Endothelial cell of umbilical vein (primary cell): ENCODE measurements at regions of chr7 and their contacts with region 1.

Region 1: GRCh38 chr7:134432296-134433152 is 26.4 kb downstream of the AKR1B1 start:
- DNase-seq: peak; percentile 93
- H3K4me3 ChIP-seq: peak overlapping the region in 2 of 3 experiments; percentile 31 to 44
- H3K27ac ChIP-seq: peak overlapping the region; percentile 45
- H3K4me1 ChIP-seq: peaks cover 9% of the 10 kb centered on the region
- H3K27me3 ChIP-seq: no peaks in the 10 kb centered on the region
- CTCF ChIP-seq: peak; percentile 41 to 67
- POLR2A ChIP-seq: peak; percentile 32

Region 2: GRCh38 chr7:134184767-134185166 is 247.8 kb before region 1 on chr7:
- CTCF ChIA-PET with region 1: no interaction called
- POLR2A ChIA-PET with region 1: no interaction called
- dilution Hi-C with region 1: no loop called
- intact Hi-C with region 1: no loop called
- DNase-seq: no peak
- H3K4me3 ChIP-seq: no peak overlapping the region
- H3K27ac ChIP-seq: no peak overlapping the region
- H3K4me1 ChIP-seq: no peaks in the 10 kb centered on the region
- H3K27me3 ChIP-seq: peaks cover 2 to 3% of the 10 kb centered on the region in 2 experiments
- CTCF ChIP-seq: no peak
- POLR2A ChIP-seq: no peak

Region 3: DNA sequence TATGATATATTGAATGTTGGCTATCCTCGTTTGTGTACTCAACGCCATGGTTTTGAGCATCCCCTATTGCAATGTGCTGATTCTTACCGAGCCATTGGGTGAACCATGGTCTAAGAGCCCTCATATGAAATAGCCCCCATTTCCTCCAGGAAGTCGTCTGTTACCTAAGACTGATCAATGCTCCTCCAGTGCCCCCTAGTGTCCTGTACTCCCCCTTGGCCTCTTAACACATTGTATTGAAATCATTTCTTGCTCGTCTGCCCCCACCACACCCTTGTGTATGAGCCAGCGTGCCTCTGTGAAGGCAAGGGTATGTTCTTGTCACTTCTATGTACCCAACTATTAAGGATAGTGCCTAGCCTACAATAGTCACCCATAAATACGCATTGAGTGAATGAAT is 104.6 kb before region 1 on chr7:
- CTCF ChIA-PET with region 1: no interaction called
- POLR2A ChIA-PET with region 1: no interaction called
- dilution Hi-C with region 1: no loop called
- intact Hi-C with region 1: no loop called
- DNase-seq: peak; percentile 46
- H3K4me3 ChIP-seq: no peak overlapping the region
- H3K27ac ChIP-seq: no peak overlapping the region
- H3K4me1 ChIP-seq: no peaks in the 10 kb centered on the region
- H3K27me3 ChIP-seq: peaks cover 0 to 25% of the 10 kb centered on the region in 2 experiments
- CTCF ChIP-seq: peak; percentile 46 to 47
- POLR2A ChIP-seq: no peak

Region 4: GRCh38 chr7:134442441-134443220 is 10.1 kb after region 1 on chr7:
- CTCF ChIA-PET with region 1: interaction called, 36 read pairs
- POLR2A ChIA-PET with region 1: no interaction called
- dilution Hi-C with region 1: no loop called
- intact Hi-C with region 1: no loop called
- DNase-seq: no peak
- H3K4me3 ChIP-seq: no peak overlapping the region
- H3K27ac ChIP-seq: no peak overlapping the region
- H3K4me1 ChIP-seq: no peaks in the 10 kb centered on the region
- H3K27me3 ChIP-seq: no peaks in the 10 kb centered on the region
- CTCF ChIP-seq: no peak
- POLR2A ChIP-seq: no peak

Region 5: DNA sequence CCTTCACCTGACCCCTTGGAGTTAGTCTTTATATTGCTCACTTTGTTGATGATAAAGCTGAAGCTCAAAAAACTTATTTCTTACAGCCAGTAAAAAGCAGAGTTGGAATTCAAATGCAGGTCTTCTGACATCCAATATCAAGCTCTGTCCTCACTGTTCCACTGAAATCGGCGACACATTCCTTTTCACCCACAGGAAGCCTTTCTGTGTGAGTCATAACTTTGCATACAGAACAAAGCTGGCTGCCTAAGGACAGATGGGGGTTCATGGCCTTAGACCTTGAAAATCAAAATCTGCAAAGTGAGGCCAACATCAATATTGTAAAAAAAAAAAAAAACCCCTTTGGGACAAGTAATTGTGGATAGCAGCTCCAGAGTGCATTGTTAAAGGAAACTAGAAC is 48.2 kb after region 1 on chr7:
- CTCF ChIA-PET with region 1: interaction called, 76 read pairs
- POLR2A ChIA-PET with region 1: no interaction called
- dilution Hi-C with region 1: no loop called
- intact Hi-C with region 1: loop called (anchors 1 kb)
- DNase-seq: peak; percentile 71
- H3K4me3 ChIP-seq: no peak overlapping the region
- H3K27ac ChIP-seq: peak overlapping the region; percentile 9
- H3K4me1 ChIP-seq: peaks cover 16% of the 10 kb centered on the region
- H3K27me3 ChIP-seq: no peaks in the 10 kb centered on the region
- CTCF ChIP-seq: no peak
- POLR2A ChIP-seq: no peak

Region 6: GRCh38 chr7:134547397-134548054 is 115.0 kb after region 1 on chr7:
- CTCF ChIA-PET with region 1: interaction called, 115 read pairs
- POLR2A ChIA-PET with region 1: no interaction called
- dilution Hi-C with region 1: no loop called
- intact Hi-C with region 1: loop called (anchors 1 kb)
- DNase-seq: peak; percentile 79
- H3K4me3 ChIP-seq: peak overlapping the region; percentile 21 to 70 (median 62)
- H3K27ac ChIP-seq: no peak overlapping the region
- H3K4me1 ChIP-seq: peaks cover 7% of the 10 kb centered on the region
- H3K27me3 ChIP-seq: peaks cover 10 to 15% of the 10 kb centered on the region in 2 experiments
- CTCF ChIP-seq: peak; percentile 78 to 90
- POLR2A ChIP-seq: no peak

Region 7: DNA sequence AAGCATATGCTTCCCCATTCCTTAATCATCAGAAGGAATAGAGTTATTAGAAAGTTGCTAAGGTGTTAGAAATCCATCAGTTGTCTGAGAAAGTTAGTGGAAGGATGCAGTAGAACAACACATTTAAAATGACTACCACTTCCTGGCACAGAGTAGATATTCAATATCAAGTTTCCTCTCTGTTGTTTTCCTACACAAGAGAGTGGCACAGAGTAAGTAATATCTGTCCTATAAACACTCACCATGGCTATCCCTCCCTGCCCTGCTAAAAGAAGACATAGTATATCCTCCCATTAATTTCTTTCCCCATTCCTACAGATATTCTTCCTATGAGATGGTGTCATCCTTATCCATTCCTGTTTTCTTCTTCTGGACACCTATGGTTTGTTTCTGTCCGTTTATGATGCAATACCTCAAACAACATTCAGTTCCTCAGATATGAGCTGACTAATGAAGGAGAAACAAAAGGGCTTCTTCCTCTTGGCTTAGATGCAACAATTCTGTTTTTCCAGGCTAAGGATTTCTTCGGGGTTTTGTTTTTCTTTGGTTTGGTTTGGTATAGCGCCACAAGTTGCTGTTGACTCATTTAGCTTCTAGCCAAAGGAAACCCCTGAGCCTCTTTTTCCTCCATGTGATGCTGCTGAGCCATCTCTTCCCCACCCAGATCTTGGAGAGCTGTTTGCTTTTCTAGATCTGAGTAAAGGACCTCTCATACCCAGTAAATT is 181.3 kb after region 1 on chr7:
- CTCF ChIA-PET with region 1: interaction called, 101 read pairs
- POLR2A ChIA-PET with region 1: no interaction called
- dilution Hi-C with region 1: no loop called
- intact Hi-C with region 1: no loop called
- DNase-seq: peak; percentile 99
- H3K4me3 ChIP-seq: peak overlapping the region in 1 of 3 experiments; percentile 3
- H3K27ac ChIP-seq: peak overlapping the region; percentile 85
- H3K4me1 ChIP-seq: peaks cover 28% of the 10 kb centered on the region
- H3K27me3 ChIP-seq: no peaks in the 10 kb centered on the region
- CTCF ChIP-seq: no peak
- POLR2A ChIP-seq: peak; percentile 64

Region 8: DNA sequence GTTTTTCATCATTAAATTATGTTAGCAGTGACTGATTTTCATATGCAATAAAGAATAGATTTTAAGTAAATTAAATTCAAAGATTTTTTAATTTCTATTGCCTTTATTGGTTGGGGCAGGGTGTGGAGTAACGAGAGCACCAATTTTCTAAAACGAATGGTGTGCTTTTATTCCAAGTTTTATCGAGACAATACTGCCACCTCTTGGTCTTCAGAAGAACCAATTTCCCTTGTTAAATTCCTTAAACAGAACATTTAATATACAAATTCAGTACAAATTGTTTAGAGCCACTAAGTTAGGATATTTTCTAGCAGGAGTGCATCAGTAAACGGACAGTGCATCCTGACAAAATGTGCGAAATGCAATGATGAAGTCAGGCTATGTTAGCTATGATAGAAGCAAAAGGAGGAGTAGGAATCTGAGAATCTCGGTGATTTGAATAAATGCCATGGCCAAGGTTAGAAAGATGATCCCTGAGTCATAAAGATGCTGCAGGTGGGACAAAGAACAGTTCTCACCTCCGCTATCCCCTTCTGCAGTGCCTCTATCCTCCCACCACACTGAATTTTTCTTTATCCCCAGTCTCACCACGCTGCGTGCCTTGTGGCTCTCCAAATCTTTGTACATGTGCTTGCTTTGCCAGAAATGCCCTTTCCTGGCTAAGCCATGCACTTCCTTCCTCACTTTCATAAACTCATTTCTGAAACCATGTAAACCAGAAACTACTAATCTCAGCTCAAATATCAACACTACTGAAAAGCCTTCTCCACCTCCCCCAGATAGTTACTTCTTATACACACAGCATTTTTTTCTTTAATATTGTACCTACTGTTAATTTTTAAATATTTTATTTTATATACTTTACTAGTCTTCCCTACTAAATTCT is 521.9 kb after region 1 on chr7:
- CTCF ChIA-PET with region 1: no interaction called
- POLR2A ChIA-PET with region 1: no interaction called
- dilution Hi-C with region 1: no loop called
- intact Hi-C with region 1: loop called (anchors 10 kb)
- DNase-seq: peak; percentile 38
- H3K4me3 ChIP-seq: no peak overlapping the region
- H3K27ac ChIP-seq: no peak overlapping the region
- H3K4me1 ChIP-seq: no peaks in the 10 kb centered on the region
- H3K27me3 ChIP-seq: no peaks in the 10 kb centered on the region
- CTCF ChIP-seq: peak; percentile 20 to 37
- POLR2A ChIP-seq: no peak